ENCODE measurements at regions of chr5 and their contacts with region 1.

Region 1: DNA sequence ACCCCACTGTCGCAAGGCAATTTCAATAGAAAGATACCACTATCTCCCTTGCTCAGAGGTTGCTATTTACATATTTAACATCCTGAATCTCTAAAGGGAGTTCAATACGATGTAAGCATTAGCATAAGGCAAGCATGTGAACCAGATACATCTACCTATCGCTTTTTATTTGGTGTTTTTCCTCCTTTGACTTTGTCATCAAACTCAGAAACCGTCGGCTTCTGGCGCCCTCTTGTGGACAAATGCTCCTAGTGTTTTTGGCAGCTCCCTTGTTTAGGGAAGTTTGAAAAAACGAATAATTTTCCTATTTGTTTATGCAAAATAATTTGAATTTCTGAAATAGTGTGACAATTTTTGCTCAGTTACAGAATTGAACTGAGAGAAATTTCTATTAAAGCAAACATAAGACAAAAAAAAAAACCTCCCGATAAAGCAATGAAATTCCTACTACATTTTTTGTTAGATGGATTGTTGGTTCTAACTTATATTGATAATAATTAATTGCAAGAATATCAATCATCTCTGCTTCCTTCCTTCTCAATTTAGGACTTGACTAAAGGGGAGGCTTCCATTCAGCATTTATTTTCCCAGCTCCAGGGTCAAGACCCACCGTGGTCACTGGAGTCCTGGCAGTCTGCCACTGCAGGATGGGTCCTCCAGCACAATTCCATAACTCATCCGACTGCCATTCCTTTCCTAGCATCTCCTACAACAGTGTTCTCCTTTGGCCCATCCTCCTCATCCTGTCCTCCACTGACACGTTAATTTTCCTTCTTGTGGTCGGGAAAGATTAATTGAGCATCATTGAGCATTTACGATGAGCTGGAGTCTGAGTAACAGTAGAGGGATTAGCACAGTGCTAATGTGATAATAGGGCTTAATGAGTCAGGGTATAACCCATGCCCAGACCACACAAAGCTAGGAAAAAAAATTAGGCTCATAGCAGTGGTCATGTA is 131.8 kb upstream of the CHD1 start:
- DNase-seq: peak; percentile 34
- H3K4me3 ChIP-seq: no peak overlapping the region
- H3K27ac ChIP-seq: no peak overlapping the region
- H3K27me3 ChIP-seq: no peaks in the 10 kb centered on the region
- CTCF ChIP-seq: peak; percentile 90

Region 2: DNA sequence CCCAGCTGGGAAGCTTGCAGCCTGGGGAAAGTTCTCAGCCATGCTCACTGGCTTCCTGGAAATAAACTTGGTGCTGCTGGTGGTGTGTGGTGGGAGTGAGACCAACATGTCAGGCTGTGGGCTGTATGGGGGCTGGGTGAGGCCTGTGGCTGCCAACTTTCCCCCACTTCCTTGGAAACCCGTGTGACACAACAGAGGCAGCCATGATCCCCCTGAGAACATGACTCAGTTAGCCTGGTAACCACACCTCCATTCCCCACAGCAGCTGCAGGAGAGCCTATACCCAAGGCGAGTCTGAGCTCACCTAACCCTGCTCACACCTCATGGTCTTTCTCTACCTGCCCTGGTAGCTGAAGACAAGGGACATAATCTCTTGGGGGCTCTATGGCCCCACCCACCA is 359.9 kb before region 1 on chr5:
- CTCF ChIA-PET with region 1: no interaction called
- POLR2A ChIA-PET with region 1: no interaction called
- DNase-seq: no peak
- H3K4me3 ChIP-seq: no peak overlapping the region
- H3K27ac ChIP-seq: no peak overlapping the region
- H3K27me3 ChIP-seq: no peaks in the 10 kb centered on the region
- CTCF ChIP-seq: no peak

Region 3: GRCh38 chr5:98880151-98880550 is 180.4 kb before region 1 on chr5:
- CTCF ChIA-PET with region 1: interaction called, 11 read pairs
- POLR2A ChIA-PET with region 1: no interaction called
- DNase-seq: no peak
- H3K4me3 ChIP-seq: no peak overlapping the region
- H3K27ac ChIP-seq: no peak overlapping the region
- H3K27me3 ChIP-seq: no peaks in the 10 kb centered on the region
- CTCF ChIP-seq: no peak

Region 4: GRCh38 chr5:98905857-98906690 is 154.5 kb before region 1 on chr5:
- CTCF ChIA-PET with region 1: interaction called, 64 read pairs
- POLR2A ChIA-PET with region 1: no interaction called
- DNase-seq: no peak
- H3K4me3 ChIP-seq: no peak overlapping the region
- H3K27ac ChIP-seq: no peak overlapping the region
- H3K27me3 ChIP-seq: no peaks in the 10 kb centered on the region
- CTCF ChIP-seq: peak; percentile 74

Region 5: DNA sequence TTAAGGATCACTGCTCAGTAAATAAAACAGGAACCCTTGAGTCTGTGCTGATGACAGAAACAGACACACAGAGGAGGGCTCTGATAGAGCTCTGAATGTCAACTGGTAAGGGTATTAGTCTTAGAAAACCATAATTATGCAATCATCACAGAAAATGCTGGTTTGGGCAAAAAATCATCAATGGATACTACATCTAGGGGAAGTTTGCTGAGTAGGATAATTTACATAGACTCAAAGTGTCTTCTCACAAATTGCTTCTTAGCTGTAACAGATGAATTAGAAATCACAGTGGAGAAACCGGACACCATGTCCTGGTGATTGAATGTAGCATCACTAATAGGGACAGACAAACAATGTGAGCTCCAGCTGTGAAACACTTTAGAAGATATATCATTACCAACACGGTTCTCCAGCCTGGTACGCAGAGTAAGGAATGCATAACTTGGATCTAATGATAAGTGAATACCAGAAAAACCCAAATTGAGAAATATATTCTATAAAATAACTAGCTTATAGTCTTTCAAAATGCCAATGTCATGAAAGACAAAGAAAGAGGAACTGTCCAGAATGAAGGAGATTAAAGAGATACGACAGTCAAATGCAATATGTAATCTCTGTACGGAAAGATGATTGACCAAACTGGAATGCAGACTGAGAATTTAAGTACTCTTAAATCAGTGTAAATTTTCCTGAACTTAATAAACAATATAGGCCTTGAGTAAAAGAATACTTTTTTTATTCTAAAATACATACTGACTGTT is 149.1 kb before region 1 on chr5:
- CTCF ChIA-PET with region 1: interaction called, 11 read pairs
- POLR2A ChIA-PET with region 1: no interaction called
- DNase-seq: no peak
- H3K4me3 ChIP-seq: no peak overlapping the region
- H3K27ac ChIP-seq: no peak overlapping the region
- H3K27me3 ChIP-seq: no peaks in the 10 kb centered on the region
- CTCF ChIP-seq: no peak

Region 6: DNA sequence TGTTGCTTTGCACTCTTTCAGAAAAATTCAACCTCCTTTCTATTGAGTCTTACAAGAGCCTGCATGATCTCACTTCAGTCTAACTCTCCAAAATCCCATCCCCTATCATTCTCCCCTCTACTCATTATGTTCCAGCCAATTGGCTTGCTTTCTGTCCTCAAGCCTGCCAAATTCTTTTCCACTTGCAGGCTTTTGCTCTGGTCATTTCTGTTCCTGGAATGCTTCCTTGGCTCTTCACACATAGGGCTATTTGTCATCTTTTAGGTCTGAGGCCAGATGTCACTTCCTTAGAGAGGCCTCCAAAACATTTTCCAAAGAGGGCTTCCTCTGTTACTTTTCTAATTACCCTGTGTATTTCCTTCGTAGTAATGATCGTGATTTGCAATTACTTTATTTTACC is 120.0 kb before region 1 on chr5:
- CTCF ChIA-PET with region 1: interaction called, 15 read pairs
- POLR2A ChIA-PET with region 1: no interaction called
- DNase-seq: no peak
- H3K4me3 ChIP-seq: no peak overlapping the region
- H3K27ac ChIP-seq: no peak overlapping the region
- H3K27me3 ChIP-seq: no peaks in the 10 kb centered on the region
- CTCF ChIP-seq: no peak

Region 7: GRCh38 chr5:99032234-99033013 is 28.2 kb before region 1 on chr5:
- CTCF ChIA-PET with region 1: interaction called, 15 read pairs
- POLR2A ChIA-PET with region 1: no interaction called
- DNase-seq: peak; percentile 63
- H3K4me3 ChIP-seq: no peak overlapping the region; the same call in 1 of the 2 replicates
- H3K27ac ChIP-seq: no peak overlapping the region
- H3K27me3 ChIP-seq: no peaks in the 10 kb centered on the region
- CTCF ChIP-seq: peak; percentile 86

Region 8: GRCh38 chr5:99045871-99046270 is 14.7 kb before region 1 on chr5:
- CTCF ChIA-PET with region 1: interaction called, 18 read pairs
- POLR2A ChIA-PET with region 1: no interaction called
- DNase-seq: no peak
- H3K4me3 ChIP-seq: no peak overlapping the region
- H3K27ac ChIP-seq: no peak overlapping the region
- H3K27me3 ChIP-seq: no peaks in the 10 kb centered on the region
- CTCF ChIP-seq: no peak

Measured in AG04450 (cell line).